GM18951 (cell line): ENCODE measurements at regions of chr10 and their contacts with region 1.

Region 1: GRCh38 chr10:102503281-102504220 is at the start of gene SUFU:
- POLR2A ChIP-seq: peak; percentile 84

Region 2: DNA sequence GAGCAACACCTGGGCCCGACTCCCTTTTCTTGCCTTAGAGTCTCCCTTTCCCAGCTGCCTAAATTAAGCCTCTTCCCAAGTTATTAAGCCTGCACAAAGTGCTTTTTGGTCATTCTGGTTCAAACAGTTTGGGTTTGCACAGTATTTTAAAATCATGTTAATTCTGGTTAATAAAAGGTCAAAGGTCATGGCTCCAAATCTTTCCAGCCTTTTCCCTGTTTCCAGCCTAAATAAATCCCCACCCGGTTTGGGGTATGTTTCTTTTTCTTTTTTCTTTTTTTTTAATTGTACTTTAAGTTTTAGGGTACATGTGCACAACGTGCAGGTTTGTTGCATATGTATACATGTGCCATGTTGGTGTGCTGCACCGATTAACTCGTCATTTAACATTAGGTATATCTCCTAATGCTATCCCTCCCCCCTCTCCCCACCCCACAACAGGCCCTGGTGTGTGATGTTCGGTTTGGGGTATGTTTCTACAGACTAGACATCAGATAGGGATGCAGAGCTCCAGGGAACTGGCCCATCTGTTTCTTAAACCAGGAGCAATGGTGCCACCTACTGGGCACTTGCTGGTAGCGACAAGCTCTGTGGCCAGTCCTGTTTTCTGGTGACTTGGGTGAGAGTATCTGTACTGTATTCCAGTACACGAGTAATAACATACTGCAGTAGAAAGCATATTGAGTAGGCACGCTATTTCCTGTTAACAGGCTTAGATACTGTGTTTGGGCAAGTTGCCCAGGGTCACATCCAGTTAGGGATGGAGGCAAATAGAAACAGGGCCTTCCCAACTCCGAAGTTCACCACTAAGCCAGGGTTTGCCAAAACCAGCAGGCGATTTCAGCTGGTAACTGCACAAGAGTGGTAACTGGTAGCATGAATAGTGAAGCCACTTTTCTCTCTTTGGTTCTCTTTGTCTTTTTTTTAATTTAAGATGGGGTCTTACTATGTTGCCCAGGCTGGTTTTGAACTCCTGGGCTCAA is 80.2 kb after region 1 on chr10:
- in situ Hi-C with region 1: loop called (anchors 10 kb)
- POLR2A ChIP-seq: no peak